Vagina (tissue), 2 donors: ENCODE measurements at regions of chr17 and their contacts with region 1.

Region 1: GRCh38 chr17:19648475-19649406 is at the start of gene ALDH3A2:
- DNase-seq: peak in 1 of 2 donors; percentile 97
- H3K4me3 ChIP-seq: peak within 1 kb of the TSS; percentile 74 to 90
- H3K27ac ChIP-seq: peak within 1 kb of the TSS; percentile 92
- H3K4me1 ChIP-seq: peaks cover 61% of the 10 kb centered on the region
- H3K27me3 ChIP-seq: no peaks in the 10 kb centered on the region
- CTCF ChIP-seq: peak in 1 of 3 experiments; percentile 7
- POLR2A ChIP-seq: peak in 1 of 2 donors; percentile 84
- total RNA-seq, gene ALDH3A2: 268 TPM

Region 2: DNA sequence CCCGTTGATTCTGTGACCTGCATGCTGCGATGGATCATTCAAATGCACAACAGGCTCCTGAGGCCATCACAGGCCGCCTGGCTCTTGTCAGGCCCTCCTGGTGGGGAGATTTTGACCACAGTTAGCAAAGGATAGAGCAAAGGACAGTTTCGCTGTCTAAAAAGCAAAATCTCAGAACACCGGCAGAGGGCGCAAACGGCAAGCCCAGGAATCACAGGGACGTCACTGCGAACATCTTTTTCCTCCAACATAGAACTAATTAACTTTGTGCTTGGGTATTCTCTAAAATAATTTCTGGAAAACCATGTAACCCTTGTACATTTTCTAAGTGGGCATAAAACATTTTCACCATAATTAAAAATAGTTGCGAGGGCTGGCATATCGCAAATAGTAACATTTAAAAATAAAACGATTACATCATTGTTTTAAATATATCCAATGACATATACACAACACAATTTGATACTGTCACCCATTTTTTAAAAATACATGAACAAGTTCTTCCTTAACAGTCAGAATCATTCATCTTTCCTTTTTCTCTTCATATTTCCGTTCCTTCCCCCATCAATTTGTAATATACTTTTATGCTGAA is 134.7 kb before region 1 on chr17:
- intact Hi-C with region 1: loop called (anchors 10 kb)
- DNase-seq: no peak
- H3K4me3 ChIP-seq: no peak overlapping the region
- H3K27ac ChIP-seq: peak overlapping the region; percentile 63
- H3K4me1 ChIP-seq: no peaks in the 10 kb centered on the region
- H3K27me3 ChIP-seq: no peaks in the 10 kb centered on the region
- CTCF ChIP-seq: peak; percentile 84 to 95 (median 92)
- POLR2A ChIP-seq: no peak